AG04449 (cell line): ENCODE measurements at regions of chr6 and their contacts with region 1.

Region 1: GRCh38 chr6:157034436-157035230 is 257.5 kb downstream of the ARID1B start:
- DNase-seq: no peak
- H3K4me3 ChIP-seq: no peak overlapping the region
- CTCF ChIP-seq: peak; percentile 53

Region 2: GRCh38 chr6:157021344-157021992 is 13.2 kb before region 1 on chr6:
- CTCF ChIA-PET with region 1: interaction called, 23 read pairs
- POLR2A ChIA-PET with region 1: no interaction called
- DNase-seq: peak; percentile 52
- H3K4me3 ChIP-seq: peak overlapping the region; percentile 72
- CTCF ChIP-seq: peak; percentile 44

Region 3: GRCh38 chr6:157059781-157060180 is 25.1 kb after region 1 on chr6:
- CTCF ChIA-PET with region 1: interaction called, 11 read pairs
- POLR2A ChIA-PET with region 1: no interaction called
- DNase-seq: no peak
- H3K4me3 ChIP-seq: no peak overlapping the region
- CTCF ChIP-seq: no peak

Region 4: GRCh38 chr6:157184202-157185020 is 149.8 kb after region 1 on chr6:
- CTCF ChIA-PET with region 1: interaction called, 52 read pairs
- POLR2A ChIA-PET with region 1: no interaction called
- DNase-seq: no peak
- H3K4me3 ChIP-seq: no peak overlapping the region
- CTCF ChIP-seq: peak; percentile 95